A549 (cell line): ENCODE measurements at regions of chr9 and their contacts with region 1.

Region 1: GRCh38 chr9:112012026-112012902 is 115.7 kb downstream of the UGCG start:
- DNase-seq: peak; percentile 76 to 87
- ATAC-seq: peak; percentile 95 to 96
- H3K4me3 ChIP-seq: no peak overlapping the region
- H3K27ac ChIP-seq: peak overlapping the region; percentile 91
- H3K4me1 ChIP-seq: peaks cover 38% of the 10 kb centered on the region
- CTCF ChIP-seq: no peak
- EP300 ChIP-seq: 0 out of 5 replicates have a peak, but pooled peaks of 1 of the 2 experiments have one; percentile 25
- POLR2A ChIP-seq: no peak
- RAD21 ChIP-seq: no peak; a peak in 2 of 5 replicates

Region 2: GRCh38 chr9:111896353-111896958 is 115.8 kb before region 1 on chr9 and contains the start of gene UGCG:
- CTCF ChIA-PET with region 1: no interaction called
- POLR2A ChIA-PET with region 1: interaction called, 15 read pairs
- DNase-seq: peak; percentile 79 to 90
- ATAC-seq: peak; percentile 90 to 93
- H3K4me3 ChIP-seq: peak within 1 kb of the TSS; percentile 92
- H3K27ac ChIP-seq: peak within 1 kb of the TSS; percentile 87 to 97
- H3K4me1 ChIP-seq: peaks cover 46% of the 10 kb centered on the region
- CTCF ChIP-seq: no peak
- EP300 ChIP-seq: no peak
- POLR2A ChIP-seq: peak; percentile 97
- RAD21 ChIP-seq: 0 out of 5 replicates have a peak, but pooled peaks of 1 of the 2 experiments have one; percentile 12
- polyA plus RNA-seq, gene UGCG: 16.7 and 25.9 TPM in 2 replicates

Region 3: GRCh38 chr9:111916234-111916645 is 96.0 kb before region 1 on chr9:
- CTCF ChIA-PET with region 1: no interaction called
- POLR2A ChIA-PET with region 1: no interaction called
- DNase-seq: no peak
- ATAC-seq: no peak
- H3K4me3 ChIP-seq: no peak overlapping the region
- H3K27ac ChIP-seq: no peak overlapping the region
- H3K4me1 ChIP-seq: peaks cover 18% of the 10 kb centered on the region
- CTCF ChIP-seq: no peak
- EP300 ChIP-seq: no peak
- POLR2A ChIP-seq: no peak
- RAD21 ChIP-seq: no peak